Testis (tissue), 5 donors: ENCODE measurements at regions of chr6 and their contacts with region 1.

Region 1: GRCh38 chr6:33589731-33590530 is 9.9 kb upstream of the BAK1 start:
- DNase-seq: peak; percentile 80
- H3K4me3 ChIP-seq: no peak overlapping the region
- H3K27ac ChIP-seq: peak overlapping the region; percentile 80 to 87
- H3K4me1 ChIP-seq: peaks cover 41% of the 10 kb centered on the region
- H3K27me3 ChIP-seq: no peaks in the 10 kb centered on the region
- CTCF ChIP-seq: peak; percentile 76 to 84 (median 82)
- POLR2A ChIP-seq: no peak

Region 2: DNA sequence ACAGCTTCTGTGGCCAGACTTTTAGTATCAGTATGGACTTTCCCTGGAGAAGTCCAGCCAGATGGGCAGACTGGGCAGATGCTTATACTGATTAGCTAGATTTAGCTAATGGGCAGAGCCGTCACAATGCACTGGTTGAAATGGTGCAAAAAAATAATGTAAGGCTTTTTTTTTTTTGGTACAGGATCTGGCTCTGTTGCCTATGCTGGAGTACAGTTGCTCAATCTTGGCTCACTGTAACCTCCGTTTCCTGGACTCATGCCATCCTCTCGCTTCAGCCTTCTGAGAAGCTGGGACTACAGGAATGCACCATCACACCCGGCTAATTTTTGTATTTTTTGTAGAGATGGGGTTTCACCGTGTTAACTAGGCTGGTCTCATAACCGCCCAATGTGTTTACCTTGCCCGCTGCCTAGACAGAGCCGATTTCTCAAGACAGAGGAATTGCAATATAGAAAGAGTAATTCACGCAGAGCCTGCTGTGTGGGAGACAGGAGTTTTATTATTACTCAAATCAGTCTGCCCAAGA is 214.7 kb before region 1 on chr6:
- intact Hi-C with region 1: no loop called
- DNase-seq: peak; percentile 87
- H3K4me3 ChIP-seq: no peak overlapping the region
- H3K27ac ChIP-seq: peak overlapping the region; percentile 68 to 80
- H3K4me1 ChIP-seq: peaks cover 30% of the 10 kb centered on the region
- H3K27me3 ChIP-seq: no peaks in the 10 kb centered on the region
- CTCF ChIP-seq: no peak
- POLR2A ChIP-seq: no peak

Region 3: DNA sequence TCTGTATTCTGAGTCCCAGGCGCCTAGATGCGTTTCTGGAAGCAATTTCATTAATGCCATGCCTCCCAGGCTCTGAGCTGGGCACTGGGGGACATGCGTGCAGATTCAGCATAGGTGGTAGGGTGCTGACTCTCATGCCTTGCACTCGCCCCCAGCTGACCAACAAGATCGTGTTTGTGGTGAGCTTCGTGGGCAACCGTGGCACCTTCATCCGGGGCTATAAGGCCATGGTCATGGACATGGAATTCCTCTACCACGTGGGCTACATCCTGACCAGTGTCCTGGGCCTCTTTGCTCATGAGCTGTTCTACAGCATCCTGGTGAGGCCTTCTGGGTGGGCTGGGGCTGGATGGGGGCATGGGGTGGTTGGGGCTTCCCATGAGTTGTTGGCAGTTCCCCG is 99.9 kb after region 1 on chr6:
- intact Hi-C with region 1: loop called (anchors 5 kb)
- DNase-seq: no peak
- H3K4me3 ChIP-seq: no peak overlapping the region
- H3K27ac ChIP-seq: no peak overlapping the region
- H3K4me1 ChIP-seq: peaks cover 14% of the 10 kb centered on the region
- H3K27me3 ChIP-seq: no peaks in the 10 kb centered on the region
- CTCF ChIP-seq: no peak
- POLR2A ChIP-seq: no peak